H1 (cell line): ENCODE measurements at regions of chr4 and their contacts with region 1.

Region 1: DNA sequence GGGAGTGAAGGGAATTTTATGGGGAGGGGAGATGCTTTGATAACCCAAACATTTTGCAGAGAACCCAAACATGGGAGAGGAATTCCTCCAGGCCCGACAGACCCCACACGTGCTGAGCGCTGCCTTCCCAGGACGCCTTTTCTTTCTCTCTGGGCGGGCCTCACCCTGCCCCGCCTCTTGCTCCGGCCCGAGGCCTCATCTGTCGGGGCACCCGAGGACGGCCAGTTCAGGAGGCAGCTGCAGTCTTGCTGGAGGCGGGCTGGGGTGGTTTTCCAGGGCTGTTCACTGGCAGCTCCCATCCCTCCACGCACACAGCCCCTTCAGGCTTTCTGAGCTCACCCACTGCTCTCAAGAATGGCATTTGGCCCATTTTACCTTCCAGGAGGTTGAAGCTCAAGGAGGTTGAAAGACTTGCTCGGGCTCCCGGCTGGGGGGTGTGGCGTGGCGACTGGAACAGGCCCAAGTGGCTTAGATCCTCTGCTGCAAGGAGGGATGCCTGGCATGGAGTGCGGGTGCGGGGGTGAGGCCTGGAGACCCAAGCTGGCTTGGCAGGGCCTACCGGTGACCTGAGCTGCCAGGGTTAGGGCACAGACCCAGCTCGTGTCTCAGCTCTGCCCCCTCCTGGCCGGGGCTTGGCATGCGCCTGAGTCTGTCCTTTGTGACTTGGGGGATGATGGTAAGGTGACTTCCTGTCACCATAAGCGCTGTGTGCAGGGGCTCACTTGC is 99.2 kb downstream of the PSAPL1 start:
- DNase-seq: peak; percentile 53 to 98
- H3K4me3 ChIP-seq: no peak overlapping the region
- H3K27ac ChIP-seq: no peak overlapping the region
- H3K4me1 ChIP-seq: peaks cover 0 to 6% (median 4%) of the 10 kb centered on the region in 4 experiments; a peak in 4 of 7 replicates
- H3K27me3 ChIP-seq: no peaks in the 10 kb centered on the region; a peak in 1 of 7 replicates
- CTCF ChIP-seq: peak in 2 of 3 experiments; percentile 87 to 97; a peak in 3 of 4 replicates
- EP300 ChIP-seq: no peak
- POLR2A ChIP-seq: no peak
- RAD21 ChIP-seq: peak; percentile 84 to 91

Region 2: GRCh38 chr4:7201420-7202305 is 133.8 kb before region 1 on chr4:
- CTCF ChIA-PET with region 1: interaction called, 13 read pairs
- POLR2A ChIA-PET with region 1: no interaction called
- DNase-seq: no peak
- H3K4me3 ChIP-seq: no peak overlapping the region
- H3K27ac ChIP-seq: no peak overlapping the region
- H3K4me1 ChIP-seq: peaks cover 0 to 16% (median 10%) of the 10 kb centered on the region in 4 experiments; a peak in 6 of 7 replicates
- H3K27me3 ChIP-seq: 0 out of 7 replicates have a peak, but pooled peaks cover 0 to 2% (median 0%) of the 10 kb centered on the region in 4 experiments
- CTCF ChIP-seq: no peak
- EP300 ChIP-seq: no peak
- POLR2A ChIP-seq: no peak
- RAD21 ChIP-seq: no peak

Region 3: DNA sequence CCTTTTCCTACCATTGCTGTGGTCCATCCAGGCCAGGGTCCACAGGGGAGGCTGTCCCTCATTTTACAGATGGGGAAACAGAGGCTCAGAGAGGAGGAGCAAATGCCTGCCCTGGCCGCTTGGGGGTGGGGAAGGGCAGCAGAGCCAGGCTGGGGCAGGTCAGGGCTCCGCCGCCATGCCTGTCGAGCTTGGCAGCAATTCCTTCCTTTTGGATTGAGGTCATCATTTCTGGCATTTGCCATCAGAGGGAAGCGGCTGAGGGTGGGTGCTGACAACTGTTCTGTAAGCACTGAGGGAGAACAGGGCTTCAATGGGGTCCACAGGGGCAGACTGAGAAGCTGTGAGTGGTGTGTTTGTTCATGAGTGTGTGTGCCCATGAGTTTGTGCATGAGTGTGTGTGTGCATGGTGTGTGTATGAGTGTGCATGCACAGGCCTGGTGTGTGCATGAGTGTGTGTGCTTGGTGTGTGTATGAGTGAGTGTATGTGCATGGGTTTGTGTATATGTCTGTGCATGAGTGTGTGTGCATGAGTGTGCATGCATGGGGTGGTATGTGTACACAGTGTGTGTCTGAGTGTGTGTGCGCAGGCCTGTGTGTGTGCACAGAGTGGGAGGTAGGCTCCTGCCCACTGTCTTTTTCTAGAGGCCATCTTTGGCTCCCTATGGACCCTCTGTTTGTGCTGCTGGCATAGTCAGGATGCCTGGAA is 28.0 kb before region 1 on chr4:
- CTCF ChIA-PET with region 1: interaction called, 19 read pairs
- POLR2A ChIA-PET with region 1: no interaction called
- DNase-seq: no peak
- H3K4me3 ChIP-seq: no peak overlapping the region
- H3K27ac ChIP-seq: no peak overlapping the region
- H3K4me1 ChIP-seq: peaks cover 0 to 6% (median 2%) of the 10 kb centered on the region in 4 experiments; a peak in 3 of 7 replicates
- H3K27me3 ChIP-seq: no peaks in the 10 kb centered on the region; a peak in 1 of 7 replicates
- CTCF ChIP-seq: no peak
- EP300 ChIP-seq: no peak
- POLR2A ChIP-seq: no peak
- RAD21 ChIP-seq: peak in 1 of 2 experiments; percentile 15; a peak in 1 of 4 replicates

Region 4: DNA sequence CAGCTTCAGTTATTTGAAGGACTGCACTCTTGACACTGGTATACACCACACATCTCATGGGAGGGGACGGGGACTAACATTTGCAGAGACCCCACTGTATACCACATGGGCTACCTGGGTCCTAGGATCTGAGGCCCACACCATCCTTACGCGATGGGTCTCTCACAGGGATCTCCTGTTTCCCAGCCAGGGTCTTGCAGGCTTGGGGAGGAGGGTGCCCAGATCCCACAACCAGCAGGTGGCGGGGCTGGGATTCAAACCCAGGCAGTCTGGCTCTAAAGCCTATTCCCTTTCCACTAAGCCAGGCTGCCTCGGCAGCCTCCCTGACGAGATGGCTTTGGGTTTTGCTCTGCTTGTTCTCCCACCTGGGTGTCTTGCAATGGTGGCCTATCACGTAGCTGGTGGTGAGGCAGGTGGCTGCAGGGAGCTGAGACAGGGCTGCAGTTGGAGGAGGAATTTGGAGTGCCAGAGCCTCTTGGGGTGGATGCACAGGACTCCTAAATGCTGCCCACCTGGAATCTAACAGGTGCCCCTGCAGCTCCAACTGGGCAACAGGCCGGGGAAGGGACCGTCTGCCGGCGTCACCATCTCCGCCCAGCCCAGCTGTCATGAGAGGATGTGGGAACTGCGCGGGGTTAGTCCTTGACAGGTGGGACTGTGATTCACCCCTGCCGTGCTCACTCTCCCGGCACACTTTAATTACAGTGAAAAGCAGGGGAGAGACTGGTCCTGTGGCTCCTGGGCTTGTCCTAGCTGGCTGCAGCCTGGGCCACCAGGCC is 11.4 kb before region 1 on chr4:
- CTCF ChIA-PET with region 1: interaction called, 31 read pairs
- POLR2A ChIA-PET with region 1: no interaction called
- DNase-seq: no peak
- H3K4me3 ChIP-seq: no peak overlapping the region
- H3K27ac ChIP-seq: no peak overlapping the region
- H3K4me1 ChIP-seq: peaks cover 0 to 11% (median 7%) of the 10 kb centered on the region in 4 experiments; a peak in 5 of 7 replicates
- H3K27me3 ChIP-seq: no peaks in the 10 kb centered on the region
- CTCF ChIP-seq: peak in 2 of 3 experiments; percentile 9 to 10; a peak in 2 of 4 replicates
- EP300 ChIP-seq: no peak
- POLR2A ChIP-seq: no peak
- RAD21 ChIP-seq: peak in 1 of 2 experiments; percentile 14; a peak in 1 of 4 replicates

Region 5: GRCh38 chr4:7366180-7366945 is 30.9 kb after region 1 on chr4:
- CTCF ChIA-PET with region 1: interaction called, 15 read pairs
- POLR2A ChIA-PET with region 1: no interaction called
- DNase-seq: no peak
- H3K4me3 ChIP-seq: no peak overlapping the region
- H3K27ac ChIP-seq: no peak overlapping the region
- H3K4me1 ChIP-seq: peaks cover 0 to 2% (median under 1%) of the 10 kb centered on the region in 4 experiments; a peak in 3 of 7 replicates
- H3K27me3 ChIP-seq: no peaks in the 10 kb centered on the region
- CTCF ChIP-seq: no peak
- EP300 ChIP-seq: no peak
- POLR2A ChIP-seq: no peak
- RAD21 ChIP-seq: no peak

Region 6: GRCh38 chr4:7399440-7400234 is 64.1 kb after region 1 on chr4:
- CTCF ChIA-PET with region 1: no interaction called
- POLR2A ChIA-PET with region 1: no interaction called
- DNase-seq: no peak
- H3K4me3 ChIP-seq: no peak overlapping the region
- H3K27ac ChIP-seq: no peak overlapping the region
- H3K4me1 ChIP-seq: no peaks in the 10 kb centered on the region
- H3K27me3 ChIP-seq: peaks cover 0 to 3% (median under 1%) of the 10 kb centered on the region in 4 experiments; a peak in 2 of 7 replicates
- CTCF ChIP-seq: no peak
- EP300 ChIP-seq: no peak
- POLR2A ChIP-seq: no peak
- RAD21 ChIP-seq: no peak

Region 7: DNA sequence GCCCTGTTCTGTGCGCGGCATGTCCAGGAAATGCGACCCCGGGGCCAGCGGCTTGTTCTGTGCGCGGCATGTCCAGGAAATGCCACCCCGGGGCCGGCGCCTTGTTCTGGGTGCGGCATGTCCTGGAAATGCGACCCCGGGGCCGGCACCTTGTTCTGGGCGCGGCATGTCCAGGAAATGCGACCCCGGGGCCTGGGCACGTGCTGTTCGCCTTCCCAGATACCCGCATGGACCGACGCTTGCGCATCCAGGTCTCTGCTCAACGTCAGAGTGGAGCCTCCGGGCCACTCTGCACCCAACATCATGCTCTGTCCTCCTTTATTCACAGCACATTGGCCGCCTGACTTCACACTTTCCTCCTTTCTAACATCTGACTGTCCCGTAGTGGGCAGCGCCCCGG is 175.0 kb after region 1 on chr4:
- CTCF ChIA-PET with region 1: no interaction called
- POLR2A ChIA-PET with region 1: no interaction called
- DNase-seq: no peak
- H3K4me3 ChIP-seq: no peak overlapping the region
- H3K27ac ChIP-seq: no peak overlapping the region
- H3K4me1 ChIP-seq: peaks cover 0 to 10% (median under 1%) of the 10 kb centered on the region in 4 experiments; a peak in 4 of 7 replicates
- H3K27me3 ChIP-seq: peaks cover 0 to 2% (median 0%) of the 10 kb centered on the region in 4 experiments; a peak in 1 of 7 replicates
- CTCF ChIP-seq: no peak
- EP300 ChIP-seq: no peak
- POLR2A ChIP-seq: no peak
- RAD21 ChIP-seq: no peak

Region 8: GRCh38 chr4:7607156-7607910 is 271.8 kb after region 1 on chr4:
- CTCF ChIA-PET with region 1: no interaction called
- POLR2A ChIA-PET with region 1: no interaction called
- DNase-seq: no peak
- H3K4me3 ChIP-seq: no peak overlapping the region
- H3K27ac ChIP-seq: no peak overlapping the region
- H3K4me1 ChIP-seq: no peaks in the 10 kb centered on the region
- H3K27me3 ChIP-seq: no peaks in the 10 kb centered on the region
- CTCF ChIP-seq: no peak
- EP300 ChIP-seq: no peak
- POLR2A ChIP-seq: no peak
- RAD21 ChIP-seq: no peak